CD8-positive, alpha-beta memory T cell (primary cell): ENCODE measurements at regions of chr11 and their contacts with region 1.

Region 1: DNA sequence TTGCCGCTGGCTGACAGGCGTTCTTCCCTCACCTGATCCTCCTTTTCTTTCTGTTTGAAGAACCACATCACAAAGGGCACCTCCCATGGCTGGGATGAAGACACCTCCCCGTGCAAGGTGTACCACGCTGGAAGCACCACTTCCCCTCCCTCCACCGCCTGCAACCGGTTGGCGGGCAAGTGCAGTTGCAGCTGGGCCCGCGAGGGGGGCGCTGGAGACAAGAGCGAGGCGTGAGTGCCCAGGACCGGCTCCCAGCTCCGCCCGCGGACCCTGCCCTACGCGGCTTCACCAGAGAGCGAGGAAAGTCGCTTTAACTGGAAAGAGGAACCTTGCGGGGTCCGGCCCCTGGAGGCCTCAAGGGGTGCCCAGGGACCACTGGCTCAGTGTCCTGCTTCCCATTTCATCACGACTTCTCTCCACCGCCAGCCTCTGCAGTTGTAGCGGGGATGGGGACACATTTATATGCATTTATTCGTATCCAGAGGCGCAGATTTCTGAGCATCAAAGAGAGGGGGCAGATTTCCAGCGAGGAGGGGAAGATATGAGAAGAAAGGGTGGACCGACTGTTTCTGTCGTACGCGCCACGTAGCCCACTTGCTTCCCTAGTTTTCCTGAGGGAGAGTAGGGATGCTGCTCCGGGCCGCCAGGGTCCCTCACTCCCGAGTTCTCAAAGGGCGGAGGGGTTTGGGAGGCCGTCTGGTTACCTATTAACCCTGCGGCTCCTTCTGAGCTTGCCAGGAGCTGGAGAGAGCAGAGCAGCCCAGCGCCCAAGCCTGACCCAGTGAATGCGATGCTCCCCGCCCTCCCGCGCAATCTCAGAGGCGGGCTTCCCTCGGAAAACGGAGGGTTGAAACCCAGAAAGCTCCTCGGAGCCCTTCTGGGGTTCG is 3.5 kb downstream of the ESAM start:
- DNase-seq: peak; percentile 45 to 74 (median 51)
- H3K4me3 ChIP-seq: peak overlapping the region; percentile 8
- H3K4me3 Mint-ChIP-seq: peak overlapping the region in 6 of 7 donors; percentile 4 to 71 (median 50)
- H3K27ac ChIP-seq: no peak overlapping the region
- H3K27ac Mint-ChIP-seq: peak overlapping the region in 1 of 8 donors; percentile 47
- H3K4me1 ChIP-seq: peaks cover 31% of the 10 kb centered on the region
- H3K4me1 Mint-ChIP-seq: peaks cover 14 to 39% (median 17%) of the 10 kb centered on the region in 3 donors
- H3K27me3 ChIP-seq: peaks cover 44% of the 10 kb centered on the region
- H3K27me3 Mint-ChIP-seq: peaks cover 44 to 62% of the 10 kb centered on the region in 2 donors

Region 2: GRCh38 chr11:124707829-124708228 is 50.7 kb before region 1 on chr11:
- CTCF ChIA-PET with region 1: no interaction called
- POLR2A ChIA-PET with region 1: no interaction called
- DNase-seq: no peak
- H3K4me3 ChIP-seq: no peak overlapping the region
- H3K4me3 Mint-ChIP-seq: no peak overlapping the region
- H3K27ac ChIP-seq: no peak overlapping the region
- H3K27ac Mint-ChIP-seq: no peak overlapping the region
- H3K4me1 ChIP-seq: no peaks in the 10 kb centered on the region
- H3K4me1 Mint-ChIP-seq: no peaks in the 10 kb centered on the region
- H3K27me3 ChIP-seq: no peaks in the 10 kb centered on the region
- H3K27me3 Mint-ChIP-seq: peaks cover 11 to 41% of the 10 kb centered on the region in 2 donors

Region 3: GRCh38 chr11:124739479-124740276 is 18.9 kb before region 1 on chr11 and contains the start of gene NRGN:
- CTCF ChIA-PET with region 1: interaction called, 73 read pairs
- POLR2A ChIA-PET with region 1: interaction called, 4 read pairs
- DNase-seq: peak; percentile 71 to 85 (median 78)
- H3K4me3 ChIP-seq: peak within 1 kb of the TSS; percentile 79
- H3K4me3 Mint-ChIP-seq: peak within 1 kb of the TSS; percentile 80 to 94 (median 84)
- H3K27ac ChIP-seq: no peak within 1 kb of the TSS
- H3K27ac Mint-ChIP-seq: peak within 1 kb of the TSS in 4 of 8 donors; percentile 38 to 95 (median 46)
- H3K4me1 ChIP-seq: peaks cover 17% of the 10 kb centered on the region
- H3K4me1 Mint-ChIP-seq: peaks cover 17 to 20% (median 19%) of the 10 kb centered on the region in 3 donors
- H3K27me3 ChIP-seq: no peaks in the 10 kb centered on the region
- H3K27me3 Mint-ChIP-seq: peaks cover 19 to 28% of the 10 kb centered on the region in 2 donors
- total RNA-seq, gene NRGN: 4.6 to 6.4 TPM

Region 4: GRCh38 chr11:124778281-124778680 is 19.7 kb after region 1 on chr11:
- CTCF ChIA-PET with region 1: interaction called, 29 read pairs
- POLR2A ChIA-PET with region 1: no interaction called
- DNase-seq: no peak
- H3K4me3 ChIP-seq: no peak overlapping the region
- H3K4me3 Mint-ChIP-seq: no peak overlapping the region
- H3K27ac ChIP-seq: no peak overlapping the region
- H3K27ac Mint-ChIP-seq: no peak overlapping the region
- H3K4me1 ChIP-seq: peaks cover 10% of the 10 kb centered on the region
- H3K4me1 Mint-ChIP-seq: peaks cover 11 to 16% (median 13%) of the 10 kb centered on the region in 3 donors
- H3K27me3 ChIP-seq: no peaks in the 10 kb centered on the region
- H3K27me3 Mint-ChIP-seq: no peaks in the 10 kb centered on the region

Region 5: DNA sequence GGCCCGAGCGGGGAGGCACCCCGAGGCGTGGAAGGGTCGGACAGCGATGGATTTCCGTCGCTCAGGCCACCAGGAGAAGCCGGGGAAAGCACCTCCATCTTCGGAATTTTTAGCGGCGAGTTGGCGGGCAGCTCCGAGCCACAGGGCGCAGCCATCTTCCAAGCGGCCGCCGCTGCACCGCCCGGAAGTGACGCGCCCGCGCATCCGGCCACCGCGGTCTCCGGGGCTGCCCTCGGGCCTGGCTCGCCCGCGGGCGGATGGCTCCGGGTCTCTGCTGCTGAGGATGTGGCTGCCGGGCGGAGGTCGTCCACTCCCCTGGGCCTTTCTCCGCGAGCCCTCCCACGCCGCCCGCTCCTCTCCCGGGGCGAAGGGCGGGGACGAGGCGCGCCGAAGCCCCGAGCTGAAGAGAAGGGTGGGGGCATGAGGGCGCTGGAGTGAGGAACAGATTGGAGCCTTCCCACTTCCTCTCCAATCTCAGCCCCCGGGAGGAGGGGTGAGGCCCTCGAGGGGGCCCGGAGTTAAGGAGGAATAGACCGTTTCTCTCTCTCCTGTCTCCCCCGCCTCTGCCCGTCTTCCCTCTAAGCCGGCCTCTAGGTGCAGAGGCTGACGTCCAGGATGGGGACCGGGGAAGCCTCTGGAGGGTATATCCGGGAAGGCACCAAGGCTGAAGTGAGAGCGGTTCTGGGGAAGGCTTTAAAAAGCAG is 41.8 kb after region 1 on chr11 and contains the start of gene MSANTD2:
- CTCF ChIA-PET with region 1: interaction called, 40 read pairs
- POLR2A ChIA-PET with region 1: no interaction called
- DNase-seq: peak; percentile 70 to 83 (median 80)
- H3K4me3 ChIP-seq: peak within 1 kb of the TSS; percentile 95
- H3K4me3 Mint-ChIP-seq: peak within 1 kb of the TSS; percentile 91 to 97 (median 93)
- H3K27ac ChIP-seq: peak within 1 kb of the TSS; percentile 94
- H3K27ac Mint-ChIP-seq: peak within 1 kb of the TSS; percentile 90 to 100 (median 96)
- H3K4me1 ChIP-seq: peaks cover 29% of the 10 kb centered on the region
- H3K4me1 Mint-ChIP-seq: peaks cover 25 to 43% (median 29%) of the 10 kb centered on the region in 3 donors
- H3K27me3 ChIP-seq: no peaks in the 10 kb centered on the region
- H3K27me3 Mint-ChIP-seq: peaks cover 0 to 2% of the 10 kb centered on the region in 2 donors
- total RNA-seq, gene MSANTD2: 12.3 to 13.2 TPM